Left ventricle myocardium superior (tissue), 1 donor: ENCODE measurements at regions of chrX and their contacts with region 1.

Region 1: GRCh38 chrX:107716816-107717700 is 58.5 kb downstream of the TSC22D3 start:
- DNase-seq: peak; percentile 86
- ATAC-seq: peak; percentile 80

Region 2: DNA sequence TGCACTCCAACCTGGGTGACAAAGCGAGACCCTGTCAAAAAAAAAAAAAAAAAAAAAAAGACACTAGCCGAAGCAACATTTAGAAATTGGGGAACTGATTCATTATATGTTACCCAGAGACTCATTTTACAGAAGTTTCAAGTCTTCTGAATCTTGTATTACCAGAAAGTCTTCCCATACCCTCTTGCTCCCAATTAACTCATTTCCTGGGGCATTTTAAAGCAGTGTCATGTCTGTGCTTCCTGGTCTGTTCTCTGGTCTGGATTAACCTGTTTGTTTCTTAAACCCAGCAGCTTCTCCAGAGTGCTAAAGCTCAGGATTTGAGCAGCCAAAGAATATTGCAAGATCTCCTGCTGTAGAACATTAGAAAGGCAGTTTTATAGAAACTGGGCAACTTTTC is 223.9 kb before region 1 on chrX:
- intact Hi-C with region 1: no loop called
- DNase-seq: no peak
- ATAC-seq: no peak

Region 3: GRCh38 chrX:107672955-107673378 is 44.1 kb before region 1 on chrX:
- intact Hi-C with region 1: loop called (anchors 5 kb)
- DNase-seq: peak; percentile 81
- ATAC-seq: peak; percentile 44